Endothelial cell of umbilical vein (primary cell): ENCODE measurements at regions of chr11 and their contacts with region 1.

Region 1: GRCh38 chr11:94151903-94152677 is 23.4 kb downstream of the PANX1 start:
- DNase-seq: peak; percentile 81
- H3K4me3 ChIP-seq: no peak overlapping the region
- H3K27ac ChIP-seq: peak overlapping the region; percentile 34
- H3K4me1 ChIP-seq: peaks cover 34% of the 10 kb centered on the region
- H3K27me3 ChIP-seq: no peaks in the 10 kb centered on the region
- CTCF ChIP-seq: no peak
- POLR2A ChIP-seq: no peak

Region 2: DNA sequence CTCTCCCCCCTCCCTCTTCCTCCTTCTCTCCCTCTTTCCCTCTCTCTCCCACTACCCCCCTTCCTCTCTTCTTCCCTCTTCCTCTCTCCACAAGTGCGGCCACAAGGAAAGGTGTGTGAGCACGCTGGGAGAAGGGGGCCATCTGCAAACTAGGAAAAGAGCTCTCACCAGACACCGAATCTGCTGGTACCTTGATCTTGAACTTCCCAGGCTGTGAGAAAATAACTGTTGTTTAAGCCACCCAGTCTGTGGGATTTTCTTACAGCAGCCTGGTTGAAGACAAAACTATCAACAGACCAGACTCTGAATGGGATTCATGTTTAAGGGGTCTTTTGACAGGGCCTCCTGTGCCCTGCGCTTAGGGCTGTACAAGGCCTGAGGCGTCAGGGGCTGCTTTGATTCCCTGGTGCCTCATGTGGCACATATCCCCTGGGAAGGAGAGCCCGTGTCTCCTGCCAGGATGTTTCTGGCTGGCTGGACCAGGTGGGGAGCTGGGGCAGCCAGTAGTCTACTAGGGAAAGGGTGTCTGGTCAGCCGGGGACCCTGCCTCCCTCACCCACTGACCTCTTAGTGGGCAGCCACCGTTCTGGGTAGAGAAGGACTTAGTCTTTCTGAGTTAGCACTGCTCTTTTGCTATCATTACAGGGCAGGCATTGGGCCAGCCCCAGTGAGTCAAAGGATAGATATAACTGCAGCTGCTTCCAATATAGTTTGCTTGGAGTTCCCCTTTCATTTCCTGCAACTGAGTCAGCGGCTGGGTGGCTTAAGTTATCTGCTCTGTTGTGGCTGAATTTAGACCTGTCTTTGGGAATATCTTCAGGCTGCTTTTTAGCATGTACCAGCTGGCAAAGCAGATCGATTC is 17.2 kb before region 1 on chr11:
- CTCF ChIA-PET with region 1: interaction called, 11 read pairs
- POLR2A ChIA-PET with region 1: no interaction called
- dilution Hi-C with region 1: no loop called
- intact Hi-C with region 1: loop called (anchors 1 kb)
- DNase-seq: peak; percentile 93
- H3K4me3 ChIP-seq: peak overlapping the region in 2 of 3 experiments; percentile 20 to 32
- H3K27ac ChIP-seq: peak overlapping the region; percentile 98
- H3K4me1 ChIP-seq: peaks cover 51% of the 10 kb centered on the region
- H3K27me3 ChIP-seq: no peaks in the 10 kb centered on the region
- CTCF ChIP-seq: no peak
- POLR2A ChIP-seq: no peak

Region 3: GRCh38 chr11:94193288-94193687 is 41.2 kb after region 1 on chr11:
- CTCF ChIA-PET with region 1: no interaction called
- POLR2A ChIA-PET with region 1: no interaction called
- dilution Hi-C with region 1: no loop called
- intact Hi-C with region 1: no loop called
- DNase-seq: peak; percentile 10
- H3K4me3 ChIP-seq: no peak overlapping the region
- H3K27ac ChIP-seq: no peak overlapping the region
- H3K4me1 ChIP-seq: no peaks in the 10 kb centered on the region
- H3K27me3 ChIP-seq: no peaks in the 10 kb centered on the region
- CTCF ChIP-seq: no peak
- POLR2A ChIP-seq: no peak

Region 4: DNA sequence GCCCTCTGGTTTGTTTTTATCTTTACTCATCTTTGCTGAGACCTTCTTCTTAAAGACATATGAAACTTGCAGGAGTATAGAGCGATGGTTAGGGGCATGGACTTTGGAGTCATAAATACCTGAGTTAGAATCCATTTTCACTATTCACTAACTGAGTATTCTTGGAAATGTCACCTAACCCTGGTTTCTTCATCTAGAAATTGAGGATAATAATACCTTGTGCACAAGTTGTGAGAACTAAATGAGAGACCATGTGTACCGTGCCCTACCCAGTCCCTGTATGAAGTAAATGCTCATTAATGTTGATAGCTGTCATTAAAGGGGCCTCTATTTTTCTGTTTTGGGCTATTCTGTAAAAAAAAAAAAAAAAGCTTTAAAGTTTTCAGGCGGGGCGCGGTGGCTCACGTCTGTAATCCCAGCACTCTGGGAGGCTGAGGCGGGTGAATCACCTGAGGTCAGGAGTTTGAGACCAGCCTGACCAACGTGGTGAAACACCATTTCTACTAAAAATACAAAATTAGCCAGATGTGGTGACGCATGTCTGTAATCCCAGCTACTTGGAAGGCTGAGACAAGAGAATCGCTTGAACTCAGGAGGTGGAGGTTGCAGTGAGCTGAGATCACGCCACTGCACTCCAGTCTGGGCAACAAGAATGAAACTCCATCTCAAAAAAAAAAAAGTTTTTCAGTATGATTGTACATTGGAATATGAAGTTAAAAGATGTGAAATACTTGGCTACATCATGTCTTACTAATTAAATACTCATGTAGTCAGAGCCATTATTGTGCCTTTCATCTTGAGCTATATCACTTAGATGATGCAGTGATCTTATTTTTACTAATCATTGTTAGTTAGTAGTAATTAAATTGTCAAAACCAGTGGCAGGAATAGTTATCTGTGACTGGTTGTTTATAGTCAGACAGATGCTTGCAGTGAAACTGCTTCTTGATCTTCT is 711.1 kb after region 1 on chr11:
- CTCF ChIA-PET with region 1: no interaction called
- POLR2A ChIA-PET with region 1: no interaction called
- dilution Hi-C with region 1: no loop called
- intact Hi-C with region 1: no loop called
- DNase-seq: no peak
- H3K4me3 ChIP-seq: no peak overlapping the region
- H3K27ac ChIP-seq: no peak overlapping the region
- H3K4me1 ChIP-seq: no peaks in the 10 kb centered on the region
- H3K27me3 ChIP-seq: no peaks in the 10 kb centered on the region
- CTCF ChIP-seq: no peak
- POLR2A ChIP-seq: no peak